Activated B cell treated with CpG ODN at 0.5 μM for 24 hours (primary cell): ENCODE measurements at regions of chr2 and their contacts with region 1.

Region 1: DNA sequence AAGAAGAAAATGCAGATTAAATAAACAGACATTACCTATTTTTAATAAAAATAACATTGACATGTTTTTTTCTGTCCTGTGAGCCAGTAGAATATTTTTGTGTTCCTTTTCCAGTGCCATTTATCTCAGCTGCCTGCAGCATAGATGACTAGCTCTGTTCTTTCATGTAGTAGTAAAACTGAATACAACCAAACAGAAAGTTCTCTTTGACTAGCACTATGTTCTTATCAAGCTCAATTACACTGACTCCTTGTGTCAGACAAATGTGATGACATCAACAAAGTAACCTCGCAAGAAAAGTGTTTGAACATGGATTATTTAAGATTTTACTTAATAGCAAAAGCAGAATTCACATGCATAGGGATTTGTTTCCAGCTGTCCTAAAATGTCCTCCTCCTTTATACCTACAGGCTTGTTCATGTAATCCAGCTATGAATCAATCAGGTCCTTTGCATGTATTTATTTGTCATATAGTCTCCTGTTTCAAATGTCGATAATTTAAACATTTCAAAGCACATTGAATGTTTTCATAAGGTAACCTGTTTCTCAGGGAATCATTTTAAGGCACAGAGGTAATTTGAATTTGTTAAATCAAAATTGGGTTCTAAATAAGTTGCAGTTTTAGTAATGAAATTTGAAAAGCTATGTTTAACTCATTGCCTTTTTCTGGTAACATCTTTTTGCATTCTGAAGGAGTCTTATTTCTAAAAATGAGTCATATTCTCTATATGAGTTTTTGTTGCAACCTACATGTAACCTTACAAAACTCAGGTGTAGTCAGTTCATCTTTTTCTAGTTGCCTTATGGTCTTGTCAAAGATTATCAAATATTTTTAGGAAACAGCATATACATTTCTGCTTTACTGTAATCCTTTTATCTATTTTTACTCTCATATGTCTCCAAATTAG is 215.3 kb upstream of the GULP1 start:
- DNase-seq: no peak
- ATAC-seq: no peak
- H3K4me3 Mint-ChIP-seq: no peak overlapping the region
- H3K27ac Mint-ChIP-seq: no peak overlapping the region
- H3K4me1 Mint-ChIP-seq: no peaks in the 10 kb centered on the region
- H3K27me3 Mint-ChIP-seq: no peaks in the 10 kb centered on the region
- CTCF ChIP-seq: no peak

Region 2: DNA sequence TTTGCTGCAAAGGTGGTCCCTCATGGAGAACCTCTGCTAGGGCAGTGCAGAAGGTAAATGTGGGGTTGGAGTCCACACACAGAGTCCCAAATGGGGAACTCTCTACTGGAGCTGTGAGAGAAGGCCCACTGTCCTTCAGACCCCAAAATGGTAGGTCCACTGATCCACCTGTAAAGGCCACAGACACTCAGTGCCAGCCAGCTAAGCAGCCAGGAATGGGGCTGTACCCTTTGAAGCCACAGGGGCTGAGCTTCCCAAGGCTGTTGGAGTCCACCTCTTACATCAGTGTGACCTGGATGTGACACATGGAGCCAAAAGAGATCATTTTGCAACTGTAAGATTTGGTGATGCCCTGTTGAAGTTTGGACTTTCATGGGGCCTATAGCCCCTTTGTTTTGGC is 37.1 kb before region 1 on chr2:
- CTCF ChIA-PET with region 1: no interaction called
- POLR2A ChIA-PET with region 1: no interaction called
- intact Hi-C with region 1: loop called (anchors 1 kb)
- DNase-seq: no peak
- ATAC-seq: no peak
- H3K4me3 Mint-ChIP-seq: no peak overlapping the region
- H3K27ac Mint-ChIP-seq: no peak overlapping the region
- H3K4me1 Mint-ChIP-seq: no peaks in the 10 kb centered on the region
- H3K27me3 Mint-ChIP-seq: no peaks in the 10 kb centered on the region
- CTCF ChIP-seq: no peak

Region 3: GRCh38 chr2:188132385-188132784 is 56.0 kb after region 1 on chr2:
- CTCF ChIA-PET with region 1: no interaction called
- POLR2A ChIA-PET with region 1: no interaction called
- intact Hi-C with region 1: no loop called
- DNase-seq: no peak
- ATAC-seq: no peak
- H3K4me3 Mint-ChIP-seq: no peak overlapping the region
- H3K27ac Mint-ChIP-seq: no peak overlapping the region
- H3K4me1 Mint-ChIP-seq: no peaks in the 10 kb centered on the region
- H3K27me3 Mint-ChIP-seq: no peaks in the 10 kb centered on the region
- CTCF ChIP-seq: no peak

Region 4: GRCh38 chr2:188345020-188345419 is 268.6 kb after region 1 on chr2:
- CTCF ChIA-PET with region 1: no interaction called
- POLR2A ChIA-PET with region 1: no interaction called
- intact Hi-C with region 1: no loop called
- DNase-seq: no peak
- ATAC-seq: no peak
- H3K4me3 Mint-ChIP-seq: no peak overlapping the region
- H3K27ac Mint-ChIP-seq: no peak overlapping the region
- H3K4me1 Mint-ChIP-seq: no peaks in the 10 kb centered on the region
- H3K27me3 Mint-ChIP-seq: no peaks in the 10 kb centered on the region
- CTCF ChIP-seq: no peak

Region 5: DNA sequence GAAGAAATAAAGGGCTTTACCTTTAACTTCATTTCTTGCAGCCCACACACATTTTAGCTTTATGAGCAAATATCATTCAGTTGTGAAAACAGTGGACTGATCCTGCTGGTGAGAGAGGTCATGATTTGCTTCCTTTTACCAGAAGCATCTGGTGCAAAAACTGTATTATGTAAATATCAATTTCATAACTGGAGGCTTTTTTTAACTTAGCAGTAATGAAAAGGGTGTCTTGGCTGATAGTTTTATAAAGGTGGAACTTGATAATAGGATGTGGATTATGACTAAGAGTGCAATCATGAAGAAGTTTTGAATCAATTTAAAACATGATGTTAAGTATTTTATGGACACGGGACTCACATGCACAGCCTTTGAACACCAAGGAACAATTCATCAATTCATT is 519.7 kb after region 1 on chr2:
- CTCF ChIA-PET with region 1: no interaction called
- POLR2A ChIA-PET with region 1: no interaction called
- intact Hi-C with region 1: no loop called
- DNase-seq: no peak
- ATAC-seq: no peak
- H3K4me3 Mint-ChIP-seq: no peak overlapping the region
- H3K27ac Mint-ChIP-seq: no peak overlapping the region
- H3K4me1 Mint-ChIP-seq: no peaks in the 10 kb centered on the region
- H3K27me3 Mint-ChIP-seq: no peaks in the 10 kb centered on the region
- CTCF ChIP-seq: no peak